Motor neuron (in vitro differentiated cells): ENCODE measurements at regions of chr4 and their contacts with region 1.

Region 1: DNA sequence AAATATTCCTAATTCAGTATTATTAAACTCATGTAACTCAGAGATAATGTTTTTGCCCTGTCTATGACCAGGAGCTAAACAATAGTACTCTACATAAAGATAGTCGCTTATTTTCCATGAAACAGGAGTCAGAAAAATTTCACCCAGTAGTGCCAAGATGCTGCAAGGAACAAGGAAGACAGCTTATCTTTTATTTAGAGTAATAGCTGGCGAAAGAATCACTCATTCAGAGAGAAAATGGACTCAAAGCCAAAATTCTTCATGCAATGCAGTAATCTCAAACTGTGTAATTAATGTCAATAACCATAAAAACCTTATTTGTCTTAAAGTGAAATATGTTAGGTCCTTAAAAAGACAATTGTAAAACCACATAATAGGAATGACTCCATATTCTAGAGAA is 477.8 kb downstream of the ANKRD50 start:
- ATAC-seq: no peak
- H3K4me3 ChIP-seq: no peak overlapping the region
- H3K27ac ChIP-seq: no peak overlapping the region
- H3K4me1 ChIP-seq: no peaks in the 10 kb centered on the region

Region 2: GRCh38 chr4:123750044-123750443 is 484.7 kb before region 1 on chr4:
- in situ Hi-C with region 1: loop called in 1 of 9 experiments (anchors 25 kb)
- ATAC-seq: no peak
- H3K4me3 ChIP-seq: no peak overlapping the region
- H3K27ac ChIP-seq: no peak overlapping the region
- H3K4me1 ChIP-seq: no peaks in the 10 kb centered on the region

Region 3: GRCh38 chr4:124060261-124060918 is 174.4 kb before region 1 on chr4:
- in situ Hi-C with region 1: no loop called
- ATAC-seq: peak in 2 of 8 experiments; percentile 33 to 73
- H3K4me3 ChIP-seq: no peak overlapping the region
- H3K27ac ChIP-seq: no peak overlapping the region
- H3K4me1 ChIP-seq: no peaks in the 10 kb centered on the region